Activated CD4-positive, alpha-beta T cell treated with anti-CD3 and anti-CD28 coated beads for 36 hours (primary cell): ENCODE measurements at regions of chr1 and their contacts with region 1.

Region 1: DNA sequence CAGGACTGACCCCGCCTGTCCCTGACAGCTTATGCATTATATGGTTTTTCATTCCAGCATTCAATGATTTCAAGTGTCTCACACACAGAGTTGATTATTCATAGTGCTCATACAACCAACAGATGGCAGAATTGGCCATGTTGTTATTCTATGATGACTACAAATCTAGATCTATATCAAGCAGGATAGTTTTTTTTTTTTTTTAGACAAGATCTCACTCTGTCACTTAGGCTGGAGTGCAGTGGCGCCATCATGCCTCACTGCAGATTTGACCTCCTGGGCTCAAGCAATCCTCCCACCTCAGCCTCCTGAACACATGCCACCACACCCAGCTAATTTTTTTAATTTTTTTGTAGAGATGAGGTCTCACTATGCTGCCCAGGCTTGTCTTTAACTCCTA is 40.1 kb upstream of the LRRC8D start:
- DNase-seq: peak; percentile 59
- ATAC-seq: peak; percentile 73
- H3K4me3 Mint-ChIP-seq: peak overlapping the region; percentile 48
- H3K27ac Mint-ChIP-seq: peak overlapping the region; percentile 86
- H3K4me1 Mint-ChIP-seq: peaks cover 44% of the 10 kb centered on the region
- H3K27me3 Mint-ChIP-seq: no peaks in the 10 kb centered on the region

Region 2: GRCh38 chr1:89547563-89548485 is 232.9 kb before region 1 on chr1:
- CTCF ChIA-PET with region 1: no interaction called
- POLR2A ChIA-PET with region 1: no interaction called
- intact Hi-C with region 1: loop called in 1 of 2 experiments (anchors 2 kb)
- DNase-seq: peak; percentile 70
- ATAC-seq: peak; percentile 48
- H3K4me3 Mint-ChIP-seq: peak overlapping the region; percentile 20
- H3K27ac Mint-ChIP-seq: peak overlapping the region; percentile 95
- H3K4me1 Mint-ChIP-seq: peaks cover 86% of the 10 kb centered on the region
- H3K27me3 Mint-ChIP-seq: no peaks in the 10 kb centered on the region

Region 3: DNA sequence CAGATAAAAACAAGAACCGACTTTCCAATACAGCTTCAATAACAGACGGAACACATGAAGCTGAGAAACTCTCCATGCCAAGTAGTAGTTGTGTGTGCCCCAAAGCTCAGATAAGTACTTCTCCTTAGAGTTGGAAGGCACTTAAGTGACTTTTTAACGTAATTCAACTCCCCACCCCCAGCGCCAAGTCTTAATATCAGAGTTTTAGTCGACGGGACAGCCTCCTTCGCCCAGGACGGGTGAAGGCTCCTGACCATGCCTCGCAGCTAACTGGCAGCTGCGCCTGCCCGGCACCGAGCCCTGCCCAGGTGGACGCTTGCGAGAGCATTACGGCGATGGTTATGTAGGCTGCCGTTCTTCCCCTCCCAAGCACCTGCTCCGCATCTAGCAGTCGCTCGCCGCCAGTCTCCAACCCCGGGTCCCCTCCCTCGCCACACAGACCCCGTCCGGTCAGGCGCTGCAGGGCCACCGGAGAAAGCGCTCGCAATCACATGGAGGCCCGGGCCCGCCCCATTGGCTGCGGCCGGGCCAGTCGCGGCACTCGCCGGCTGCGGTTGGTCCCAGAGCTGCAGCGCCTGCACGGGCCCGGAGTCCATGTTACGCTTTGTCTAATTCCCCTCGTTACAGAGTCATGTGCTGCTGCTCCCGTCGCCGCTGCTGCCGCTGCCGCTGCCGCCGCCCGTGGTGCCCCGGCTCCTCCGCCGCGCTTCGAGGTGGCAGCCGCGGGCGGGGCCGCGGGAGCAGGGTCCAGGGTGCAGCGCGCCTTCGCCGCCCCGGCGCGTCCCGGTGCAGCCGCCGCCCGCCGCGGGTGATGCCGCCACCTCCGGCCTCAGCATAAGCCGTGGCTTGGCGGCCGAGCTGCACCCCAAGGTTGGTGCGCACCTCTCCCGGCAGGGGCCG is 40.0 kb after region 1 on chr1 and contains the start of gene LRRC8D:
- CTCF ChIA-PET with region 1: interaction called, 4 read pairs
- POLR2A ChIA-PET with region 1: no interaction called
- intact Hi-C with region 1: loop called (anchors 2 to 5 kb)
- DNase-seq: peak; percentile 83
- ATAC-seq: peak; percentile 84
- H3K4me3 Mint-ChIP-seq: peak within 1 kb of the TSS; percentile 82
- H3K27ac Mint-ChIP-seq: peak within 1 kb of the TSS; percentile 69
- H3K4me1 Mint-ChIP-seq: peaks cover 34% of the 10 kb centered on the region
- H3K27me3 Mint-ChIP-seq: no peaks in the 10 kb centered on the region
- total RNA-seq, gene LRRC8D: 24.3 to 30.0 TPM

Region 4: GRCh38 chr1:89855413-89856123 is 74.8 kb after region 1 on chr1:
- CTCF ChIA-PET with region 1: interaction called, 5 read pairs
- POLR2A ChIA-PET with region 1: no interaction called
- intact Hi-C with region 1: loop called in 1 of 2 experiments (anchors 2 kb)
- DNase-seq: no peak
- ATAC-seq: peak; percentile 72
- H3K4me3 Mint-ChIP-seq: no peak overlapping the region
- H3K27ac Mint-ChIP-seq: no peak overlapping the region
- H3K4me1 Mint-ChIP-seq: peaks cover 21% of the 10 kb centered on the region
- H3K27me3 Mint-ChIP-seq: no peaks in the 10 kb centered on the region

Region 5: DNA sequence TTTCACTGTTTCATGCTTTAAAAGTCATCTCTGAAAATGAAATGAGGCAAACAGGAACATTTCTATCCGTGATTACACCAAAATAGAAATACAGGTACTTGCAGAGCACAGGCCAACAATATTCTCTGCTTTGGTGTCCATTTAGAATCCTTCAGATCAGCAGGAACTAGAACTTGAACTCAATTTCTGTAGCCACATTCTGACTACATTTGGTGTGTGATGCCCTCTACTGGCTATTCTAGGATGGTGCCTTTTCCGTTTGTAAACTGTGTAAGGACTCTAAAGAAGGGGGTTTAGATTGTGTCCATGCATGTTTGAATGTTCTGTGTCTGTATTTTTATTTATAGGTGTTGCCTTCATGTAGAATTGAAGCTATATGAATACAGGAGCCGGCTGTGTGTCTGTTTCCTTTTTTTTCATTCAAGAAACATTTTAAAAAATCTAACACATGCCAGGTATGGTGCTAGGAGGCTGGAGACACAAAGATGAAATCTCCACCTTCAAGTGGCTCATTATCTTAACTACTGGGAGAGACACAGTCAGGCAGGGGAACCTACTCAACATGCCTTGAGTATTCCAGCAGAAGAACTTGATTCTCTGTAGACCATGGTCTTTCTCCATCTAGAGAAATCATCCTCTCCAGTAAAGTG is 206.6 kb after region 1 on chr1:
- CTCF ChIA-PET with region 1: interaction called, 12 read pairs
- POLR2A ChIA-PET with region 1: no interaction called
- intact Hi-C with region 1: loop called (anchors 1 kb)
- DNase-seq: peak; percentile 54
- ATAC-seq: peak; percentile 90
- H3K4me3 Mint-ChIP-seq: no peak overlapping the region
- H3K27ac Mint-ChIP-seq: no peak overlapping the region
- H3K4me1 Mint-ChIP-seq: peaks cover 11% of the 10 kb centered on the region
- H3K27me3 Mint-ChIP-seq: peaks cover 2% of the 10 kb centered on the region

Region 6: DNA sequence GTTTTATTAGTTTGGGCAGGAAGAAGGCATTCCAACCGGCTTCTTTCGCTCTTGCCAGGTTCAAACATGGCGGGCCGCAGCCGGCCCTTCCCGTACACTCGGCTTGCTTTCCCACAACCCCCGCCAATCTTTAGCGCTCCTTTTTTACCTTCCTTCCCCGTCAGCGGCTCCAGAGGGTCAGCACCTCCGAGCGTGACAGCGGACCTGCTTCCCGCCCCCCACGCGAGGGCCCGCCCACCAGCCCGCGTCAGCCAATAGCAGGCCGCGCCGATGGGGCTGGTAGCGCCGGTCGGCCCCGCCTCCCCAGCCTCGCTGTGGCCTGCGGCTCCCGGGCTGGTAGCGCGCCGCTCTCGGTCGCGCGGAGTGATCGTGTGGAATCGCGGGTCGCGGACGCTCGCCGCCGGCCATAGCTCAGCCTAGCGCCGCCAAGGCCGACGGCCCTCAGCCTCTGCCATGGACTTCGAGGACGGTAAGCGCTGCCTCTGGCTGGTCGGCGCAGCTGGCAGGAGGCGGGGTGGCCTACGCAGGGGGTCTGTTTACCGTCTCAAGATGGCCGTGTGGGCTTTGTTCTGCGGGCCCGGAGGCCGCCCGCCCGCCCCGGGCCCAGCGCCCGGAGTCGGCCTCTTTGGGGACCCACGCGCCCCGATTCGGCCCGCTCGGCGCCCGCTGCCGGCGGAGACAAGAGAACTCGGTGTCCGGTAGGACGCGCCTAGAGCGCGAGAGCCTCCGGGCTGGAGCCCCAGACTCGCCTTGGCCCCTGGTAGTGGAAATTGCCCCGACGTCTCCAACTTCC is 214.3 kb after region 1 on chr1 and contains the start of gene ZNF326:
- CTCF ChIA-PET with region 1: interaction called, 12 read pairs
- POLR2A ChIA-PET with region 1: no interaction called
- intact Hi-C with region 1: loop called (anchors 2 kb)
- DNase-seq: peak; percentile 97
- ATAC-seq: peak; percentile 95
- H3K4me3 Mint-ChIP-seq: peak within 1 kb of the TSS; percentile 94
- H3K27ac Mint-ChIP-seq: peak within 1 kb of the TSS; percentile 92
- H3K4me1 Mint-ChIP-seq: peaks cover 42% of the 10 kb centered on the region
- H3K27me3 Mint-ChIP-seq: no peaks in the 10 kb centered on the region
- total RNA-seq, gene ZNF326: 19.4 to 20.5 TPM